ENCODE measurements at regions of chr2 and their contacts with region 1.

Region 1: GRCh38 chr2:185895828-185896693 is 157.5 kb downstream of the FSIP2 start:
- DNase-seq: no peak
- ATAC-seq: no peak
- H3K4me3 ChIP-seq: no peak overlapping the region
- H3K27ac ChIP-seq: no peak overlapping the region
- H3K4me1 ChIP-seq: no peaks in the 10 kb centered on the region
- H3K27me3 ChIP-seq: no peaks in the 10 kb centered on the region
- CTCF ChIP-seq: no peak

Region 2: GRCh38 chr2:185306119-185306518 is 589.9 kb before region 1 on chr2:
- intact Hi-C with region 1: no loop called
- DNase-seq: no peak
- ATAC-seq: no peak
- H3K4me3 ChIP-seq: no peak overlapping the region
- H3K27ac ChIP-seq: no peak overlapping the region
- H3K4me1 ChIP-seq: no peaks in the 10 kb centered on the region
- H3K27me3 ChIP-seq: no peaks in the 10 kb centered on the region
- CTCF ChIP-seq: no peak

Region 3: GRCh38 chr2:185835974-185836373 is 60.1 kb before region 1 on chr2:
- intact Hi-C with region 1: loop called (anchors 10 kb)
- DNase-seq: no peak
- ATAC-seq: no peak
- H3K4me3 ChIP-seq: no peak overlapping the region
- H3K27ac ChIP-seq: no peak overlapping the region
- H3K4me1 ChIP-seq: no peaks in the 10 kb centered on the region
- H3K27me3 ChIP-seq: no peaks in the 10 kb centered on the region
- CTCF ChIP-seq: no peak

Measured in upper lobe of right lung (tissue), 1 donor.